H1 (cell line): ENCODE measurements at regions of chr1 and their contacts with region 1.

Region 1: GRCh38 chr1:36585569-36586548 is 103.1 kb upstream of the CSF3R start:
- DNase-seq: no peak
- H3K4me3 ChIP-seq: no peak overlapping the region
- H3K27ac ChIP-seq: no peak overlapping the region
- H3K4me1 ChIP-seq: peaks cover 12 to 38% (median 21%) of the 10 kb centered on the region in 4 experiments
- H3K27me3 ChIP-seq: no peaks in the 10 kb centered on the region; a peak in 1 of 7 replicates
- CTCF ChIP-seq: no peak
- EP300 ChIP-seq: no peak
- POLR2A ChIP-seq: no peak
- RAD21 ChIP-seq: no peak

Region 2: DNA sequence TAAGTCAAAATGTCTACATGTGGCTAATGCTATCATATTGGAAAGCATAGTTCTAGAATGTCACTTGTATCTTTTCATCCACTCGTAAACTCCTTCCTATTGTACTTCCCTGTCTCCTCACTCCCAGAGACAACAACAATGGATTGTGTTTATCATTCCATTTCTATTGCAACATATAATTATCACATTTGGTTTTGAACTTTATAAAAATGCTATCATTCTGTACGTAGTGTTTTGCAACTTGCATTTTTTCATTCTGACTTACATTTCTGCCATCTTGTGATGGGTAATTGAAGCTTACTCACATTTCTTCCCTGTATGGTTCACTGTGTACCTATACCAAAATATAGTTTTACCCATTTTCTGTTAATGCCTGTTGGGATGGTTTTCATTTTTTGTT is 88.7 kb before region 1 on chr1:
- CTCF ChIA-PET with region 1: no interaction called
- POLR2A ChIA-PET with region 1: no interaction called
- DNase-seq: no peak
- H3K4me3 ChIP-seq: no peak overlapping the region
- H3K27ac ChIP-seq: no peak overlapping the region
- H3K4me1 ChIP-seq: no peaks in the 10 kb centered on the region
- H3K27me3 ChIP-seq: no peaks in the 10 kb centered on the region
- CTCF ChIP-seq: no peak
- EP300 ChIP-seq: no peak
- POLR2A ChIP-seq: no peak
- RAD21 ChIP-seq: no peak

Region 3: GRCh38 chr1:36565576-36566501 is 20.0 kb before region 1 on chr1:
- CTCF ChIA-PET with region 1: interaction called, 21 read pairs
- POLR2A ChIA-PET with region 1: no interaction called
- DNase-seq: peak in 1 of 2 experiments; percentile 42
- H3K4me3 ChIP-seq: no peak overlapping the region
- H3K27ac ChIP-seq: no peak overlapping the region
- H3K4me1 ChIP-seq: peaks cover 0 to 4% (median 0%) of the 10 kb centered on the region in 4 experiments; a peak in 2 of 7 replicates
- H3K27me3 ChIP-seq: no peaks in the 10 kb centered on the region; a peak in 2 of 7 replicates
- CTCF ChIP-seq: no peak
- EP300 ChIP-seq: no peak
- POLR2A ChIP-seq: no peak
- RAD21 ChIP-seq: no peak

Region 4: GRCh38 chr1:36599828-36600227 is 14.0 kb after region 1 on chr1:
- CTCF ChIA-PET with region 1: interaction called, 94 read pairs
- POLR2A ChIA-PET with region 1: interaction called, 3 read pairs
- DNase-seq: no peak
- H3K4me3 ChIP-seq: no peak overlapping the region
- H3K27ac ChIP-seq: no peak overlapping the region
- H3K4me1 ChIP-seq: no peaks in the 10 kb centered on the region; a peak in 1 of 7 replicates
- H3K27me3 ChIP-seq: no peaks in the 10 kb centered on the region
- CTCF ChIP-seq: no peak
- EP300 ChIP-seq: no peak
- POLR2A ChIP-seq: no peak
- RAD21 ChIP-seq: no peak

Region 5: DNA sequence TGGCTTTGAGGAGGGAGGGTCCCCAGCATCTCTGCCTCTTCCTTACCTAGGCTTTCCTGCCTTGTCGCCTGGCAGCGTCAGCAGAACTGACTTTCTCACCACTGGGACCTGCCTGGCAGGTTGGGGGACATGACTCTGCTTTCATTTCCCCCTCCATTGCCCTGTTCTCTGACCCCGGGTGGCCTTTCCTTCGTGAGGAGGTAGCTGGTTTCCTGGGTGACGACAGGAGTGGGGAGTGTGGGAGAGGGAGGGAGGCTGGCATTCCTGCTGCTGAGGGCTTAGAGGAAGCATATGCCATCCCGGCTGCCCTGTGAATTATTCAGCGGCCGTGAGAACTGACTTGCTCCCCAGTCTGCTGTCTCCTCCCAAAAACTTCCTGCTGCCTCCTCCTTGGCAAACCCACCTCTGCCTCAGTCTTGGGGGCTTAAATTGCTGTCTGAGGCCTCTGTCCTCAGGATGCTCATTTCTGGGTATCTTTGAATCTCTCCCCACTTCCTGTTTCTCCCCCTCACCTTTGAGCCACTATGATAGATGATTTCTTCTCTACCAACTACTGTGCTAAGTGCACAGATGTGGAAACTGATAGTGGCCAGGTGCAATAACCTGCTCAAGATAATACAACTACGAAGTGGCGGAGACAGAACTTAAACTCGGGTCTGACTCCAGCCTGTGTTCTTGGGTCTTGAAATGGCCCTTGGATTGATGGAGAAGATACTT is 78.9 kb after region 1 on chr1:
- CTCF ChIA-PET with region 1: no interaction called
- POLR2A ChIA-PET with region 1: no interaction called
- DNase-seq: no peak
- H3K4me3 ChIP-seq: no peak overlapping the region
- H3K27ac ChIP-seq: no peak overlapping the region
- H3K4me1 ChIP-seq: no peaks in the 10 kb centered on the region
- H3K27me3 ChIP-seq: no peaks in the 10 kb centered on the region; a peak in 1 of 7 replicates
- CTCF ChIP-seq: no peak
- EP300 ChIP-seq: no peak
- POLR2A ChIP-seq: no peak
- RAD21 ChIP-seq: no peak